Dendritic cell treated with granulocyte-macrophage colony-stimulating factor and Interleukin-4, amounts not matched to agents 40 ng/mL and 50 ng/mL, for 4 days (primary cell): ENCODE measurements at regions of chr7 and their contacts with region 1.

Region 1: GRCh38 chr7:73667344-73668102 is at the start of gene VPS37D:
- H3K4me3 Mint-ChIP-seq: peak within 1 kb of the TSS; percentile 63
- H3K27ac Mint-ChIP-seq: no peak within 1 kb of the TSS
- H3K4me1 Mint-ChIP-seq: peaks cover 22% of the 10 kb centered on the region
- H3K27me3 Mint-ChIP-seq: peaks cover 83% of the 10 kb centered on the region

Region 2: DNA sequence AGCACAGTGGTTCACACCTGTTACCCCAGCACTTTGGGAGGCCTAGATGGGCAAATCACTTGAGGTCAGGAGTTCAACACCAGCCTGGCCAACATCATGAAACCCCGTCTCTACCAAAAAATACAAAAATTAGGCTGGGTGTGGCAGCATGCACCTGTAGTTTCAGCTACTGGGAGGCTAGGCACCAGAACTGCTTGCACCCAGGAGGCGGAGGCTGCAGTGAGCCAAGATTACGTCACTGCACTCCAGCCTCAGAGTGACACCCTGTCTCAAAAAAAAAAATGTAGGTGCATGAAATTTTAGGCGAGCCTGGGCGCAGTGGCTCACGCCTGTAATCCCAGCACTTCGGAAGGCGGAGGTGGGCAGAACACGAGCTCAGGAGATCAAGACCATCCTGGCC is 119.7 kb before region 1 on chr7:
- intact Hi-C with region 1: no loop called
- H3K4me3 Mint-ChIP-seq: no peak overlapping the region
- H3K27ac Mint-ChIP-seq: no peak overlapping the region
- H3K4me1 Mint-ChIP-seq: peaks cover 26% of the 10 kb centered on the region
- H3K27me3 Mint-ChIP-seq: no peaks in the 10 kb centered on the region

Region 3: GRCh38 chr7:73606801-73607691 is 60.5 kb before region 1 on chr7:
- intact Hi-C with region 1: loop called (anchors 5 kb)
- H3K4me3 Mint-ChIP-seq: no peak overlapping the region
- H3K27ac Mint-ChIP-seq: no peak overlapping the region
- H3K4me1 Mint-ChIP-seq: peaks cover 27% of the 10 kb centered on the region
- H3K27me3 Mint-ChIP-seq: peaks cover 93% of the 10 kb centered on the region

Region 4: DNA sequence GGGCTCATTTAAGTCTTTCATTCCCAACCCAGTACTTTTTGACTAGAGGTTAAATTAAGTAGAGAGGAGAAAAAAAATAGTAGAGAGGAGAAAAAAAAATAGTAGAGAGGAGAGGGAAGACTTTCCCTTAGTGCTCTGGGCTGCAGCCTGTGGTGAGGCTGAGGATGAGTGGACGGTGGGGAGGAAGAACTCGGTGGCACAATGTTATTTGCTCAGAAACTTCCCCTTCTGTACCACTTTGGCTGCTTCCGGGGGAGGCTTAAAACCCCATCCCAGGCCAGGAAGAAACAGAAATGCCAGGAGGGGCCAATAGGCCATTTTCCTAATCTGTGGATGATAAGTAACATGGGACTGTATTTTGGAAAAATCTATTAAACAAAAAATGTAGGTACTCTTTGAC is 28.6 kb before region 1 on chr7:
- intact Hi-C with region 1: no loop called
- H3K4me3 Mint-ChIP-seq: no peak overlapping the region
- H3K27ac Mint-ChIP-seq: no peak overlapping the region
- H3K4me1 Mint-ChIP-seq: peaks cover 33% of the 10 kb centered on the region
- H3K27me3 Mint-ChIP-seq: peaks cover 29% of the 10 kb centered on the region

Region 5: DNA sequence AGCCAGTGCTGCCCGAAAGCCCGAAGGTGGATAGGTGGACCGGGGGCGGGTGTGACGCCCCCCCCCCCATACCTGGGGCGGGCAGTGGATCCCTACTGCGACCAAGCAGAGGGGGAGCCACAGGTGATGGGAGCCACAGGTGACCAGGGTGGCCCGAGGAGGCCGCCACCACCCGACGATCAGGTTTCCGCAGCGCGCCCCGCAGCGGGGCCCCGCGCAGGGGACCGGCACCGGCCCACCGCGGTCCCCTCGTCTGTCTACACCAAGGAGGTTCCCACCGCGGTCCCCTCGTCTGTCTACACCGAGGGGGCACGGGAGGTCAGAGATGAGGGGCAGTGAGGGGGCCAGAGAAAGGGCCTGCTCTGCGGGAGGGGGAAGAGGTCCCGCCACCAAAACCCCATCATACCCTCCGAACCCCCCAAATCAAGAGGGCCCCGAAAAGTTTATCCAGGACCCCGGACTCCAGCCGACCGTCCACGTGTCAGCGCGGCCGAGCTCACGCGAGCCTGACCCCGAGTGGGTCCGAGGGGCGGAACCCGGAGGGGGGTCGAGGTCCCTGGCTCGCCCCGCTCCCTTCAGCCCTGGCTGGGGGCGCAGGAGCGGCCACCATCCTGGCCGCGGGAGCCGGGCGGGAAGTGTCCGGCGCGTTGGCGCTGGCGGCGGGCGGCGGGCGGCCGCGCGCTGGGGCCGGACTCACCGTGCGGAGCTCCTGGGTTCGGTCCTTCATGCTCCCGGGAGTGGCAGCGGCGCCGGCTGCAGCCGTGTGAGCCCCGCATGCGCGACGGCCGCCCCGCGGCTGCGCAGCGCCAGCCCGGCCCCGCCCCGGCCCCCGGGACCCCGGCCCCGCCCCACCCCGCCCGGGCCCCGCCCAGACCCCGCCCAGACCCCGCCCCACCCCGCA is 51.6 kb after region 1 on chr7 and contains the start of gene STX1A:
- intact Hi-C with region 1: loop called (anchors 5 kb)
- H3K4me3 Mint-ChIP-seq: peak within 1 kb of the TSS; percentile 73
- H3K27ac Mint-ChIP-seq: no peak within 1 kb of the TSS
- H3K4me1 Mint-ChIP-seq: peaks cover 41% of the 10 kb centered on the region
- H3K27me3 Mint-ChIP-seq: peaks cover 85% of the 10 kb centered on the region

Region 6: DNA sequence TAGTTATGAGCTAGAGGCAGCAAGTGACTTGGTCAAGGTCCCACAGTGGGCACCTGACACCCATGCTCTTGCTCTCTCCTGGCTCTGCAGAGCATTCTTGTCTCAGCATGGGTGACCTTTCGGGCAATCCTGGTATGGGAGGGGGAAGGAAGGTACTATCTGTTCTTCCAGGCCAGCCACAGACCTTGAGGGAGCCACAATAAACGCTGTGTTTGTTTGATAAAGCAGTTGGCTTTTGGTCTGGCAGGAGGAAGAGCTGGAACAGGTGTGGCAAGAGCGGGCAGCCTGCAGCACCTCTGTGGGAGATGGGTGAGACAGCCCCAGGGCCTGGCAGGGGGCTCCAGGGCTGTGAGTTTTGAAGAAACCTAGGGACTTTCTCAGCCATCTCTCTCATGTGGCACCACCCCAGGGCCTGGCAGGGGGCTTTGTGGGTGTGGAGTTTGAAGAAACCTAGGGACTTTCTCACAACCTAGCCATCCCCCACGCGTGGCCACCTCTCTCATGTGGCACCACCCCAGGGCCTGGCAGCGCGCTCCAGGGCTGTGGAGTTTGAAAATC is 91.1 kb after region 1 on chr7:
- intact Hi-C with region 1: no loop called
- H3K4me3 Mint-ChIP-seq: no peak overlapping the region
- H3K27ac Mint-ChIP-seq: no peak overlapping the region
- H3K4me1 Mint-ChIP-seq: no peaks in the 10 kb centered on the region
- H3K27me3 Mint-ChIP-seq: peaks cover 24% of the 10 kb centered on the region

Region 7: GRCh38 chr7:74240482-74240881 is 573.0 kb after region 1 on chr7:
- intact Hi-C with region 1: no loop called
- H3K4me3 Mint-ChIP-seq: no peak overlapping the region
- H3K27ac Mint-ChIP-seq: peak overlapping the region; percentile 80
- H3K4me1 Mint-ChIP-seq: peaks cover 60% of the 10 kb centered on the region
- H3K27me3 Mint-ChIP-seq: no peaks in the 10 kb centered on the region